MCF 10A (cell line): ENCODE measurements at regions of chr15 and their contacts with region 1.

Region 1: GRCh38 chr15:60464836-60465630 is 13.9 kb downstream of the ICE2 start:
- DNase-seq: peak; percentile 78
- H3K4me3 Mint-ChIP-seq: no peak overlapping the region
- H3K27ac Mint-ChIP-seq: peak overlapping the region; percentile 78
- H3K4me1 Mint-ChIP-seq: peaks cover 14% of the 10 kb centered on the region
- H3K27me3 Mint-ChIP-seq: no peaks in the 10 kb centered on the region
- CTCF ChIP-seq: no peak

Region 2: DNA sequence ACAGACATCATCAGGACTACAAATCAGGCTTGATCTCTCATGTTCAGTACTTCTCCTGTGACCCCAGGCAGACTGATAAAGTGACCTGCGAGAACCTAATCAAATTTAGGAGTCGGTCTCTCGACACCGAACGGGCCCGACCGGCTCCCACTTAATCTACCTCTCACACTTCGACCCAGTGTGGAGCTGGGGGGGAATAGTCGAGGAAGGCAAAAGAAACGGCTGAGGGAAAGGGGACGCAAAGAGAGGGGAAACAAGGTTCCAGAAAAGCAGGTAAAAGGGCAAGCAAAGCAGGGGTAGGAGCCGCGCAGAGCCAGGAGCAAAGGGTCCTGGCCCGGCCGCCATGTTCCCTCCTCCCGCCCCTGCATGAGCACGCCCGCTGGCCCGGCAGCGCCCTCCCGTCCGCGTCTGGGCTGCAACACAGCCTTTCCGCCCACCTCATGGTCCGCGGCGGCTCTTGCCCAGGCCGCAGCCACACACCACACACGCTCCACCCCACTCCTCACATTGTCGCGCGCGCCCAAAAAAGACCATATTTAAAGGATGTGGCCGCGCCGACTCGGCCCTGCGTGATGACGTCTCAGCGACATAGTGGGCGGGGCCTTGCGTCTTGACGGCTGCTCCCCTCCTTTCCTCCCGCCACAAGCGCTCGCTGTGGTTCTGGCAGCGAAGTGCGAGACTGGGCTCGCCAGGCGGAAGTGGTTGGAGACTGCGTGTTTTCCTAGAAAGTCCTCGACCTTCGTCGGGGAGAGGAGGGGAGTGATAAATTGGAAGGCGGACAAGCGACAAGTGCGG is 13.7 kb after region 1 on chr15 and contains the start of gene ICE2:
- CTCF ChIA-PET with region 1: no interaction called
- POLR2A ChIA-PET with region 1: interaction called, 24 read pairs
- intact Hi-C with region 1: no loop called
- DNase-seq: peak; percentile 93
- H3K4me3 Mint-ChIP-seq: peak within 1 kb of the TSS; percentile 90
- H3K27ac Mint-ChIP-seq: peak within 1 kb of the TSS; percentile 96
- H3K4me1 Mint-ChIP-seq: peaks cover 32% of the 10 kb centered on the region
- H3K27me3 Mint-ChIP-seq: no peaks in the 10 kb centered on the region
- CTCF ChIP-seq: no peak
- total RNA-seq, gene ICE2: 55.1 and 57.9 TPM in 2 replicates